K562 (cell line): ENCODE measurements at regions of chr6 and their contacts with region 1.

Region 1: DNA sequence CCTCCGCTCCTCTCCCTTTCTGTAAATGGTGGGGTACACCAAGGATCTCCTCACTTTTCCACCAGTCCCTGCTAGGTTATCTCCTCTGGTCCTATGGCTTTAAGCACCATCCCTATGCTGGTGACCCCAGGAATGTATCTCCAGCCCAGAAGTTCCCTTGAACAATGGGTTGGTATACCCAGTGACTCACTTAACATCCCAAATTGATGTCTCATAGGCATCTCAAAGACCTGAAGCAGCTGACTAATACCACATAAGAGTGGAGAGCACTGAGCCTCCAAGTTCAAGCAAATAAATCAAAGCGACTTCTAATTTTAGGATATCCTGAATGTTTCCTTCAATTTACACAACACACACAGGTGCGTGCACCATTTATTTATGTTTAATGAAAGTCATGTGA is 48.3 kb downstream of the ADGRF1 start:
- DNase-seq: no peak
- ATAC-seq: no peak
- H3K4me3 ChIP-seq: no peak overlapping the region
- H3K27ac ChIP-seq: no peak overlapping the region
- H3K4me1 ChIP-seq: no peaks in the 10 kb centered on the region
- H3K27me3 ChIP-seq: no peaks in the 10 kb centered on the region
- CTCF ChIP-seq: no peak
- EP300 ChIP-seq: no peak
- POLR2A ChIP-seq: no peak
- RAD21 ChIP-seq: no peak

Region 2: GRCh38 chr6:46626228-46626909 is 367.5 kb before region 1 on chr6:
- CTCF ChIA-PET with region 1: no interaction called
- POLR2A ChIA-PET with region 1: no interaction called
- in situ Hi-C with region 1: no loop called
- intact Hi-C with region 1: loop called (anchors 10 kb)
- DNase-seq: peak in 1 of 4 experiments; percentile 19
- ATAC-seq: peak; percentile 62; the same call in 2 of the 3 replicates
- H3K4me3 ChIP-seq: no peak overlapping the region
- H3K27ac ChIP-seq: no peak overlapping the region
- H3K4me1 ChIP-seq: no peaks in the 10 kb centered on the region
- H3K27me3 ChIP-seq: no peaks in the 10 kb centered on the region
- CTCF ChIP-seq: peak in 2 of 3 experiments; percentile 35 to 60; a peak in 4 of 6 replicates
- EP300 ChIP-seq: no peak
- POLR2A ChIP-seq: no peak
- RAD21 ChIP-seq: peak; percentile 63 to 79